ENCODE measurements at regions of chr11 and their contacts with region 1.

Region 1: GRCh38 chr11:114209904-114210303 is 86.3 kb upstream of the NNMT start:
- DNase-seq: peak; percentile 68
- ATAC-seq: peak; percentile 95
- H3K4me3 ChIP-seq: peak overlapping the region in 1 of 3 experiments; percentile 18; a peak in 1 of 6 replicates
- H3K27ac ChIP-seq: no peak overlapping the region
- H3K4me1 ChIP-seq: peaks cover 38% of the 10 kb centered on the region
- H3K27me3 ChIP-seq: peaks cover 0 to 8% of the 10 kb centered on the region in 2 experiments; a peak in 1 of 5 replicates
- CTCF ChIP-seq: no peak
- EP300 ChIP-seq: peak in 1 of 2 experiments; percentile 53; a peak in 2 of 4 replicates
- POLR2A ChIP-seq: no peak
- RAD21 ChIP-seq: no peak

Region 2: DNA sequence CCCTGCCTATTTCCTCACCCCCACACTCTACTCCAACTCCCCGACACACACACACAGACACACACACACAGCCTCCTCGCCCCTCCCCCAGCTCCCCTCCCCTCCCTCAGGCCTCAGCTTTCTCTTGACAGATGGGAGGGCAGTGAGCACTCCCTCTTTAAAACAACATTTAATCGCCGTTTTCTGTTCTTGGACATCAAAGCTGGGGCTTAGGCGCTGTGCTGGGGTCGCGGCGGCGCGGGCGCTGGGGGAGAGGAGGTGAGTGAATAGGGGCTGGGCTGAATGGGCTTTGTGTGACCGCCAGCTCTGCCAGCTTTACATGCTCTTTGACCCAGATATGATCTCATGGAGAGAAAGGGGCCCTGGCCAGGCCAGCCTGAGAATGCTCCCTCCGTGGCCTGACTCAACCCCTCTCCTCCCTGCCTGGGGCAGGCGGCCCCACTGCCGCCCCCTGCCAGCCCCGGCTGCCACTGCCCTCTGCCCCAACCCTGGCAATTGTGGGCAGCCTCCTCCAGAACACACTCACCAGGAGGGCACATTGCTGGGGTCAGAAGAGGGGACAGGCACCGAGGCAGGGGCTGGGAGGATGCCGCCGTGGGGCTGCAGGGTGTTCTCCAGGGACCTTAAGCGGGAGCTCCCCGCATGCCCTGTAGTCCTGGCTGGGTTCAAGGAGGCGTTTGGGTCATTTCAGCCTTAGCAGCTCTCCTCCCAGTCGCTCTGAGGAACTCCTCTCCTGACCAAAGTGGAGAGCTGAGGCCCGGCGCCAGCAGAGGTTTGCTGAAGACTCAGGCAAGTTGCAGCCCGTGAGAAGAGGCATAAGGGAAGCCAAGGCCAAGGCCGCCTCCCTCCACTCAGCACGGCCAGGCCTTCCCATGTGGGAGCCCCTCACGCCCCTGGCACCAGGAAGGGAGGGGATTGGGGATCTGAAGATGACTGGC is 48.0 kb after region 1 on chr11:
- CTCF ChIA-PET with region 1: no interaction called
- POLR2A ChIA-PET with region 1: no interaction called
- in situ Hi-C with region 1: no loop called
- intact Hi-C with region 1: loop called (anchors 2 kb)
- DNase-seq: peak; percentile 64
- ATAC-seq: peak; percentile 83
- H3K4me3 ChIP-seq: peak overlapping the region; percentile 6 to 50 (median 30); a peak in 4 of 6 replicates
- H3K27ac ChIP-seq: no peak overlapping the region
- H3K4me1 ChIP-seq: peaks cover 16% of the 10 kb centered on the region
- H3K27me3 ChIP-seq: peaks cover 4 to 27% of the 10 kb centered on the region in 2 experiments; a peak in 3 of 5 replicates
- CTCF ChIP-seq: peak; percentile 56
- EP300 ChIP-seq: no peak
- POLR2A ChIP-seq: no peak
- RAD21 ChIP-seq: 0 out of 2 replicates have a peak, but pooled peaks have one; percentile 28